Endothelial cell of umbilical vein (primary cell): ENCODE measurements at regions of chr2 and their contacts with region 1.

Region 1: GRCh38 chr2:38377050-38377828 is at the start of gene ATL2:
- DNase-seq: peak; percentile 95
- H3K4me3 ChIP-seq: peak within 1 kb of the TSS; percentile 61 to 88 (median 76)
- H3K27ac ChIP-seq: peak within 1 kb of the TSS; percentile 63
- H3K4me1 ChIP-seq: peaks cover 16% of the 10 kb centered on the region
- H3K27me3 ChIP-seq: no peaks in the 10 kb centered on the region
- CTCF ChIP-seq: no peak
- POLR2A ChIP-seq: peak; percentile 76
- total RNA-seq, gene ATL2: 45.5 and 46.3 TPM in 2 replicates

Region 2: DNA sequence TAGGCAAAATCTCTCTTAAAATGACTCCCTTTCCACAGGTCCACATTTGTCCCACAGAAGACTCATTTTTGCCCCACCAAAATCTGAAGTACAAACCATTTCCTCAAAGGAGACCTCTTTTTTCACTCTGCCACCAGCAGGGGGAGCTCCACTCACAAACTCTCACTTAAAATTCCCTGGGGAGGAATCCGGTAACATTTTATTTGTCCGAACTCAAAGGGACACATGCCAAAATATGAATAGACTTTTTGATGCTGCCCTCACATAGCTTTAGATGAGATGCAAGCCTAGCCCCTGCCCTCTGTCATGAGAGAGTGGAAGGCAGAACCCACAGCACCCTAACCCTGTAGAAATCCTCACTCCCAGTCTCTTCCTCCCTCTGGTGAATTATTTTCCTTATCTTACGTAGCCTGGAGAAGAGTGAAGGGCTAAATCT is 395.1 kb before region 1 on chr2:
- CTCF ChIA-PET with region 1: no interaction called
- POLR2A ChIA-PET with region 1: no interaction called
- dilution Hi-C with region 1: no loop called
- intact Hi-C with region 1: loop called (anchors 5 kb)
- DNase-seq: peak; percentile 60
- H3K4me3 ChIP-seq: no peak overlapping the region
- H3K27ac ChIP-seq: no peak overlapping the region
- H3K4me1 ChIP-seq: no peaks in the 10 kb centered on the region
- H3K27me3 ChIP-seq: no peaks in the 10 kb centered on the region
- CTCF ChIP-seq: peak; percentile 71 to 80
- POLR2A ChIP-seq: no peak

Region 3: GRCh38 chr2:38315707-38316333 is 61.4 kb before region 1 on chr2:
- CTCF ChIA-PET with region 1: interaction called, 31 read pairs
- POLR2A ChIA-PET with region 1: no interaction called
- dilution Hi-C with region 1: no loop called
- intact Hi-C with region 1: no loop called
- DNase-seq: peak; percentile 67
- H3K4me3 ChIP-seq: no peak overlapping the region
- H3K27ac ChIP-seq: no peak overlapping the region
- H3K4me1 ChIP-seq: no peaks in the 10 kb centered on the region
- H3K27me3 ChIP-seq: no peaks in the 10 kb centered on the region
- CTCF ChIP-seq: peak; percentile 38 to 41
- POLR2A ChIP-seq: no peak

Region 4: DNA sequence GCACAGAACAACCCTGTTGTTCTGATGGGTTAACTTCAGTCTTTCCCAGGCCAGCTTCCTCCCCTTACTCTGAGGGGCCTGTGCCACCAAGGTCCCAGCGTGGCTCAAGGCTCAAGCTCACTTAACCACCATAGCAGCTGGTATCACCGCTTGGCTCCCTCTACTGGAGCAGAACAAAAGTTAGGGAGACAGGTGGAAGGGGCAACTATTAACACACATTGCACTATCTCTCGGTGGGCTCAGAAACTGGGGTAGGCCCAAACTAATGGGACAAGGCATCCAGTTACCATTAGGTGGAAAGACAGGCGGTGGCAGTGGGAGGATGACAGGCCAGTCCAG is 88.5 kb after region 1 on chr2:
- CTCF ChIA-PET with region 1: interaction called, 17 read pairs
- POLR2A ChIA-PET with region 1: no interaction called
- dilution Hi-C with region 1: no loop called
- intact Hi-C with region 1: no loop called
- DNase-seq: peak; percentile 40
- H3K4me3 ChIP-seq: no peak overlapping the region
- H3K27ac ChIP-seq: no peak overlapping the region
- H3K4me1 ChIP-seq: no peaks in the 10 kb centered on the region
- H3K27me3 ChIP-seq: peaks cover 2 to 3% of the 10 kb centered on the region in 2 experiments
- CTCF ChIP-seq: peak in 1 of 2 donors; percentile 54
- POLR2A ChIP-seq: no peak

Region 5: GRCh38 chr2:38602732-38603401 is 225.6 kb after region 1 on chr2 and contains the start of gene HNRNPLL:
- CTCF ChIA-PET with region 1: interaction called, 4 read pairs
- POLR2A ChIA-PET with region 1: no interaction called
- dilution Hi-C with region 1: no loop called
- intact Hi-C with region 1: loop called (anchors 2 kb)
- DNase-seq: peak; percentile 98
- H3K4me3 ChIP-seq: peak within 1 kb of the TSS; percentile 95 to 99 (median 98)
- H3K27ac ChIP-seq: peak within 1 kb of the TSS; percentile 62
- H3K4me1 ChIP-seq: peaks cover 23% of the 10 kb centered on the region
- H3K27me3 ChIP-seq: no peaks in the 10 kb centered on the region
- CTCF ChIP-seq: no peak
- POLR2A ChIP-seq: peak; percentile 97
- total RNA-seq, gene HNRNPLL: 56.2 and 61.1 TPM in 2 replicates

Region 6: DNA sequence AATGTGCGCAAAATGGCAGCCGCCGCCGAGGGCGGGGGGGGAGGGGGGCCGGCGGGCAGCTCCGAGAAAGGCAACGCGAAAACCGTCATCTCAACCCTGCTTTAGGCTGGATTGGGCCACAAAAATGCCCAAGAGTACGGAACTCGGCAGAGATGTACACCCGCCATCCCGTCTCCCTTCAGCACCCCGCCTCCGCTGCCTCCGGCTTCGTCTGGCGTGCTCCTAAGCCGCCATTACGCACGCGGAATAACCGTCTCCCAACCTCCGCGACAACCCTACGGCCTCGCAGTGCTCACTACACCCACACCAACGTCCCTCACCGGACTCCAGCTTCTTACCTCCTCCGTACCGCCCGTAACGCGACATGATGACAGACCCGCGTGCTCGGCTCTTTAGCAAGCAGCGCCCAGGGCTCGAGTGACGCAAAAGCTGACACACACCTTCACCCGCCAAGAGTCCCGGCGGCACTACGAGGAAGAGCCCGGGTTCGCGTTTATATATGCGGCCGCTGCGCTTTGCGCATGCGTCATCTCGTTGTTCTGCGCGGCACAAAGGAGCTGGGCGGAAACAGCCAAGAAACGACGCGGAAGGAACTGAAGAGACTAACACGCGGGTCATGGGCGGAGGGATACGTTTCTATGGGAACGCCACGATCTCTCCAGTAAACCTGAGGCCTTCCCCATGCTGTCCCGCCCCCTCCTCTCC is 373.8 kb after region 1 on chr2 and contains the start of gene SRSF7:
- CTCF ChIA-PET with region 1: no interaction called
- POLR2A ChIA-PET with region 1: interaction called, 19 read pairs
- dilution Hi-C with region 1: no loop called
- intact Hi-C with region 1: no loop called
- DNase-seq: peak; percentile 99
- H3K4me3 ChIP-seq: peak within 1 kb of the TSS; percentile 54 to 92 (median 72)
- H3K27ac ChIP-seq: peak within 1 kb of the TSS; percentile 85
- H3K4me1 ChIP-seq: peaks cover 36% of the 10 kb centered on the region
- H3K27me3 ChIP-seq: no peaks in the 10 kb centered on the region
- CTCF ChIP-seq: no peak
- POLR2A ChIP-seq: peak; percentile 100
- total RNA-seq, gene SRSF7: 202 and 204 TPM in 2 replicates